Caco-2 (cell line): ENCODE measurements at regions of chr18 and their contacts with region 1.

Region 1: DNA sequence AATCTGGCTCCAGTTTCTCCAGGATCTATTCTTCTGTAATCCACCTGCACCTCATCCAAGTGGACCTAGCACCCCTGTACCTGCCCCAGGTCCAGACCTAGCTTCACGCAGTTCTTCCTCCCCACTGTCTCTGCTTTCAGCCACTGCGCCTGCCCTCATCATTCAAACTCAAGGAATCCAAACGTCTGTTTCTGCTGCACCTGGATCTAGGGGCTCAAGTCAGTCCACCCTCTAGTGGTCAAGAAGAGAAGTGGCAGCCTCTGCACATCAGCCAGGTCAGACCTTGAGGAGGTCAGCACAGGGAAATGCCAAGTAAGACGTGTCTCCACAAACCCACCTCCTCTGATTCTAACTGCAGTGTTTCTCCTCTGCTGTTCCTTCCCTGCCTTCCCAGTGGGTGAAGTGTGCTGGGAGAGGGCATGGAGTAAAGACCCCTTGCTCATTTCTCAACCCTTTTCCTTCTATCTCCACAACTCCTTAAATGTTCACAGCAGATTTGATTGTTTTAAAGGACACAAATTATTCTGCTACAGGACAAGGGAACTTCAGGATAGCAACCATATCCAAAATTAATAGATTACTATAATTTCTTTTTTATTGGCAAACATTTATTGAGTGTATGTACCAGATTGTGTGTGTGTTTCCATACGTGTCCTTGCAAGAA is 8.6 kb upstream of the RNF152 start:
- DNase-seq: peak; percentile 34 to 45
- H3K4me3 ChIP-seq: no peak overlapping the region
- H3K4me3 Mint-ChIP-seq: no peak overlapping the region
- H3K27ac Mint-ChIP-seq: no peak overlapping the region
- H3K4me1 ChIP-seq: no peaks in the 10 kb centered on the region
- H3K4me1 Mint-ChIP-seq: peaks cover 9% of the 10 kb centered on the region
- H3K27me3 ChIP-seq: no peaks in the 10 kb centered on the region
- H3K27me3 Mint-ChIP-seq: no peaks in the 10 kb centered on the region
- CTCF ChIP-seq: peak; percentile 55 to 77

Region 2: GRCh38 chr18:61551586-61551985 is 349.9 kb before region 1 on chr18:
- CTCF ChIA-PET with region 1: no interaction called
- POLR2A ChIA-PET with region 1: no interaction called
- intact Hi-C with region 1: loop called (anchors 1 kb)
- DNase-seq: peak in 1 of 2 experiments; percentile 56
- H3K4me3 ChIP-seq: no peak overlapping the region
- H3K4me3 Mint-ChIP-seq: no peak overlapping the region
- H3K27ac Mint-ChIP-seq: no peak overlapping the region
- H3K4me1 ChIP-seq: no peaks in the 10 kb centered on the region
- H3K4me1 Mint-ChIP-seq: no peaks in the 10 kb centered on the region
- H3K27me3 ChIP-seq: no peaks in the 10 kb centered on the region
- H3K27me3 Mint-ChIP-seq: no peaks in the 10 kb centered on the region
- CTCF ChIP-seq: peak; percentile 65 to 67